Heart right ventricle (tissue), 16 donors: ENCODE measurements at regions of chr13 and their contacts with region 1.

Region 1: DNA sequence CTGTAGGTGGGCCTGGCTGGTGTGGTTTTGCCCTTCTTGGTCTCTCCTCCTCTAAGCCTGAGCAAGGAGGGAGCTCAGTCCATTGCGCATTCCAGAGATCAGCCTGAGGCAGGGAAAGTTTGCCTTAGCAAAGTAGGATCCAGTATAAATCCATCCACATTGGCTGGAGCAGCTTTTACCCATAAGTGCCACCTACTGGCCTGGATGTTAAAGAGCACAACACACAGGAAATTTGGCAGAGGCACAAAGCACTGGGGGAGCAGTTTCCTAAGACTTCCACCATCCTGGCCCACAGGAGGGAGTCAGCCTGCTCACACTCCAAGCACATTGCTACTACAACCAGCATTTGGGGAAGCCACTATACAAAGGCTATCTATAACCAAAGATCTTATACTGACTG is 1124.2 kb downstream of the SLITRK1 start:
- DNase-seq: no peak
- ATAC-seq: no peak
- H3K4me3 ChIP-seq: no peak overlapping the region
- H3K27ac ChIP-seq: no peak overlapping the region
- H3K4me1 ChIP-seq: no peaks in the 10 kb centered on the region
- H3K27me3 ChIP-seq: no peaks in the 10 kb centered on the region
- CTCF ChIP-seq: peak in 1 of 9 donors; percentile 7

Region 2: DNA sequence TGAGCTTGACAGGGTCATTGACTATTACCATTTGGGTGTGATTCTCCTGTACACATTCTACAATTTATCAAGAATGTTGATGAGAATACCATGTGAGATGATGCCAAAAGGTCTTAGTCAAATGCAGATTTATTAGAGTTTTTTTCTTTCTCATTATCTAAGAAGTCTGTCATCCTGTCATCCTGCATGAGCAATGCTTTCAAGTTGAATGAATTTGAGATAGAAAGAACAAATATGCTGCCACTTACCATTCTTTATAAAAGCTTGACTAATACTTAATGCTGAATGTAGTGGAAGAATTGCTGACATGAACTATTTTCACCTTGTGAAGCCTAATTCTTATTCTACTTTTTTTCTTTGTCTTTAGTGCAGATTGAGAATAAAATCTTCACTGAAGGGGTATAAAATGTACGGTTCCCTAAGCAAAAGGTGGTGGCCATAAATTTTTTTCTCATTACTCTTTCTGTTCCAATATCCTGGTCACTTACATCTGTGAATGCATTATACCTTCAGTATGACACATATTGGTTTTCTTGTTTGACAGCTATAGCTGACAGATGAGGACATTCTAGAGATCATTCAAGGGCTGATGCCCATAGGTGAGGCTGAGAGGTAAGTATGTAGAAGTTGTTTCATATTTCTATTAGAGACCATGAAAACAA is 310.5 kb before region 1 on chr13:
- intact Hi-C with region 1: no loop called
- DNase-seq: no peak
- ATAC-seq: no peak
- H3K4me3 ChIP-seq: no peak overlapping the region
- H3K27ac ChIP-seq: no peak overlapping the region
- H3K4me1 ChIP-seq: no peaks in the 10 kb centered on the region
- H3K27me3 ChIP-seq: no peaks in the 10 kb centered on the region
- CTCF ChIP-seq: no peak

Region 3: GRCh38 chr13:82800391-82800790 is 42.3 kb after region 1 on chr13:
- intact Hi-C with region 1: no loop called
- DNase-seq: no peak
- ATAC-seq: no peak
- H3K4me3 ChIP-seq: no peak overlapping the region
- H3K27ac ChIP-seq: no peak overlapping the region
- H3K4me1 ChIP-seq: no peaks in the 10 kb centered on the region
- H3K27me3 ChIP-seq: no peaks in the 10 kb centered on the region
- CTCF ChIP-seq: no peak

Region 4: DNA sequence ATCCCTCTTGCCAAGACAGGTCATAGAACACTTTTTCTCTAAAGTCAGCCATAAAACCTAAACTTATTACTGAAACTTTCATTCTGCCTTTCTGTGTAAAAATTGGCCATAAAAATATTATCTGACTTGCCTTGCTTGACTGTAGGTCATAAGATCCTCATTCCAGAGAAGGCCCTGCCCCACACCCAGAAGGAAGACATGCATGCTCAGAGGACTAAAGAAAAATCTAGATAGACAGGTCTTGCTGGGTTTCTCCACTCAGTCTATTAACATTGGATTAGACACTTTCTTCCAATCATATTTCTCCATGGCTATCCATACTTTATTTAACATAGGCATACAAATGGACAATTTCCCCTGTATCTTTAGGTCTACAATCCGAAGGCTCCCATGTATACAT is 57.7 kb after region 1 on chr13:
- intact Hi-C with region 1: loop called in 1 of 10 experiments (anchors 2 kb)
- DNase-seq: no peak
- ATAC-seq: no peak
- H3K4me3 ChIP-seq: no peak overlapping the region
- H3K27ac ChIP-seq: no peak overlapping the region
- H3K4me1 ChIP-seq: no peaks in the 10 kb centered on the region
- H3K27me3 ChIP-seq: no peaks in the 10 kb centered on the region
- CTCF ChIP-seq: no peak